OCI-LY7 (cell line): ENCODE measurements at regions of chr12 and their contacts with region 1.

Region 1: GRCh38 chr12:90627180-90627896 is 327.6 kb downstream of the CCER1 start:
- DNase-seq: no peak
- H3K4me3 ChIP-seq: no peak overlapping the region
- H3K27ac ChIP-seq: no peak overlapping the region
- H3K4me1 ChIP-seq: no peaks in the 10 kb centered on the region
- CTCF ChIP-seq: no peak

Region 2: DNA sequence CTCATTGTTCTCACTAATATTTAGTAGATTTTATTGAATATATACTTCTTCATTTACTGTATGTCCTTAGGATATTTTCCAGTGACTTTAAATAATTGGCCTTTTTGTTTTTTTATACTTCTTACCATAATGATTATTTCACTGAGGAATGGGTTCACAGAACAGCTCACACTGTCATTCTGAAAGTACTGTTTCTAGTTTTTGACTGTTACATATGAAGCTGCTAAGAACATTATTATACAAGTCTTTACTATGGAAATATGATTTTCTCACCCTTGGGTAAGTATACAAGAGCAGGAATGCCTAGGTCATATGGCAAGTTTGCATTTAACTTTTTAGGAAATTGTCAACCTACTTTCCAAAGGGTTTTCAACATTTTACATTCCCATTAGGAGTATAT is 15.4 kb before region 1 on chr12:
- CTCF ChIA-PET with region 1: no interaction called
- POLR2A ChIA-PET with region 1: no interaction called
- intact Hi-C with region 1: loop called (anchors 1 kb)
- DNase-seq: no peak
- H3K4me3 ChIP-seq: no peak overlapping the region
- H3K27ac ChIP-seq: no peak overlapping the region
- H3K4me1 ChIP-seq: no peaks in the 10 kb centered on the region
- CTCF ChIP-seq: no peak